SK-N-SH (cell line): ENCODE measurements at regions of chr5 and their contacts with region 1.

Region 1: GRCh38 chr5:119411935-119412602 is 40.2 kb upstream of the HSD17B4 start:
- DNase-seq: peak; percentile 58
- H3K4me3 ChIP-seq: peak overlapping the region; percentile 57 to 62
- H3K27ac ChIP-seq: peak overlapping the region; percentile 80 to 82
- H3K4me1 ChIP-seq: peaks cover 0 to 14% of the 10 kb centered on the region in 2 experiments; a peak in 3 of 4 replicates
- H3K27me3 ChIP-seq: no peaks in the 10 kb centered on the region
- CTCF ChIP-seq: peak; percentile 97
- EP300 ChIP-seq: no peak
- RAD21 ChIP-seq: peak; percentile 91

Region 2: DNA sequence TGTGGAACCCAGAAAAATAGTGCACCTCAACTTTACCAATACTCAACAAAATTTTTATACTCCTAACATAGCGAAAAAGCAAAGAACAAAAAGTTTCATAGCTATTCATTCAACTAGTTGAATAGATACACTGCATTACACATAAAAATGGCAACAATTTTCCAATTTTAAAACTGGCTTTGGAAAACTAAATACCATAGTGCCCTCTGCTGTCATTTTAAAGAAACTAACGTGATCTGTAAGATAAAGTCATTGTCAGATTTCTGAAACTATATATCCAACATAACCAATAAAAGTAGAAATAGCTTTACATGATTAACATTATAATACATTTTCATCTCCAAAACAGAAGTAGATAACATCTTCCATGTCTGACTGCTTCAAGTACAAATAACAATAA is 455.3 kb before region 1 on chr5:
- CTCF ChIA-PET with region 1: interaction called, 10 read pairs
- POLR2A ChIA-PET with region 1: no interaction called
- DNase-seq: peak; percentile 34
- H3K4me3 ChIP-seq: no peak overlapping the region
- H3K27ac ChIP-seq: no peak overlapping the region
- H3K4me1 ChIP-seq: no peaks in the 10 kb centered on the region; a peak in 1 of 4 replicates
- H3K27me3 ChIP-seq: no peaks in the 10 kb centered on the region
- CTCF ChIP-seq: peak; percentile 66
- EP300 ChIP-seq: no peak
- RAD21 ChIP-seq: peak; percentile 77

Region 3: GRCh38 chr5:119315516-119315949 is 96.5 kb before region 1 on chr5:
- CTCF ChIA-PET with region 1: interaction called, 11 read pairs
- POLR2A ChIA-PET with region 1: no interaction called
- DNase-seq: peak; percentile 38
- H3K4me3 ChIP-seq: no peak overlapping the region; a peak in 1 of 4 replicates
- H3K27ac ChIP-seq: peak overlapping the region in 1 of 2 experiments; percentile 18; a peak in 1 of 4 replicates
- H3K4me1 ChIP-seq: peaks cover 4 to 14% of the 10 kb centered on the region in 2 experiments; a peak in 2 of 4 replicates
- H3K27me3 ChIP-seq: no peaks in the 10 kb centered on the region
- CTCF ChIP-seq: peak; percentile 41
- EP300 ChIP-seq: no peak
- RAD21 ChIP-seq: peak; percentile 52

Region 4: DNA sequence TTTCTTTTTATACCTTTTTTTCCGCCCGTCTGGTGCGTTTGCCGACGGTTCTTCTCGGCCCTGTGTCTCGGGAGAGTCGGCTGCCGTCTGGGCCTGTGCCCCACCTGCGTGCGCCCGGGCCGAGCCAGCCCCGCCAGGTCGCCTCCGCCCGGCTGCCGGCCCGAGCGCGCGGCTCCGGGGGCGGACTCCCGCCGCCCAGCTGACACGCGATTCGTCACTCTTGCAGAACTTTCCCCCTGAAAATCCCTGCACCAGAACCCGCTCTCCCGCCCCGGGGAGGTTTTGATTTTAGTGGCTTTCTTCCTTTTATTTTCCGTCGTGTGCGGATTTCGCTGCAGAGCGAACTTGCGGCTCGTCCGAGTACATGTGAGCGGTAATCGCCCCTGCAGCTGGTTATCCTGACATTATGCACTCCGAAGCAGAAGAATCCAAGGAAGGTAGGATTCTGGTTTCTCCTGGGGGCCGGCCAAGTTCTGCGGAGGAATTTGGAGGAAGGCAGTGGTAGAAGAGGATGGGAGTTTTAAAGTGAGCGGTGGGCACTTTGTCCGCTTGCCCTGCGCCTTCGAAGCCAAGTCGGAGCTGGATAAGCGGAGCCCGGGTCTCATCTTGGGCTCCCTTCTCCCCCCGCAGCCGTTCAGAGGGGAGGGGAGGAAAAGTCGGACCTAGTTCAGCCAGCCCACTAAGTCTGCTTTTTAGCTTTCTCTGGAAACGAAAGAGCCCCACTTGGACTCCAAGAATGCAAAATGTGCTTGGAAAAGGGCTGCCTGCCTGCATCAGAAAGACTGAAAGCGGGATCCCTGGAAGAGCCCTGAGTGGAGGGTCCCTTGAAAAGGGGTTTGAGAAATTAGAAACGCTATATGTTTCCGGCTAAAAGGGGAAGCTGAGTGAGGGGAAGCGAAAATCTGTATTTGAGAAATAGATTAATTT is 56.1 kb before region 1 on chr5 and contains the start of gene TNFAIP8:
- CTCF ChIA-PET with region 1: interaction called, 10 read pairs
- POLR2A ChIA-PET with region 1: no interaction called
- DNase-seq: peak; percentile 63
- H3K4me3 ChIP-seq: peak within 1 kb of the TSS; percentile 45 to 53
- H3K27ac ChIP-seq: no peak within 1 kb of the TSS; a peak in 1 of 4 replicates
- H3K4me1 ChIP-seq: peaks cover 0 to 4% of the 10 kb centered on the region in 2 experiments; a peak in 2 of 4 replicates
- H3K27me3 ChIP-seq: no peaks in the 10 kb centered on the region
- CTCF ChIP-seq: no peak
- EP300 ChIP-seq: no peak
- RAD21 ChIP-seq: no peak
- polyA plus RNA-seq, gene TNFAIP8: 28.3 and 31.3 TPM in 2 replicates

Region 5: GRCh38 chr5:119395080-119395836 is 16.8 kb before region 1 on chr5:
- CTCF ChIA-PET with region 1: interaction called, 21 read pairs
- POLR2A ChIA-PET with region 1: no interaction called
- DNase-seq: no peak
- H3K4me3 ChIP-seq: no peak overlapping the region
- H3K27ac ChIP-seq: peak overlapping the region; percentile 36 to 93; a peak in 3 of 4 replicates
- H3K4me1 ChIP-seq: peaks cover 6 to 49% of the 10 kb centered on the region in 2 experiments
- H3K27me3 ChIP-seq: no peaks in the 10 kb centered on the region
- CTCF ChIP-seq: no peak
- EP300 ChIP-seq: no peak
- RAD21 ChIP-seq: no peak